PC-9 (cell line): ENCODE measurements at regions of chr1 and their contacts with region 1.

Region 1: DNA sequence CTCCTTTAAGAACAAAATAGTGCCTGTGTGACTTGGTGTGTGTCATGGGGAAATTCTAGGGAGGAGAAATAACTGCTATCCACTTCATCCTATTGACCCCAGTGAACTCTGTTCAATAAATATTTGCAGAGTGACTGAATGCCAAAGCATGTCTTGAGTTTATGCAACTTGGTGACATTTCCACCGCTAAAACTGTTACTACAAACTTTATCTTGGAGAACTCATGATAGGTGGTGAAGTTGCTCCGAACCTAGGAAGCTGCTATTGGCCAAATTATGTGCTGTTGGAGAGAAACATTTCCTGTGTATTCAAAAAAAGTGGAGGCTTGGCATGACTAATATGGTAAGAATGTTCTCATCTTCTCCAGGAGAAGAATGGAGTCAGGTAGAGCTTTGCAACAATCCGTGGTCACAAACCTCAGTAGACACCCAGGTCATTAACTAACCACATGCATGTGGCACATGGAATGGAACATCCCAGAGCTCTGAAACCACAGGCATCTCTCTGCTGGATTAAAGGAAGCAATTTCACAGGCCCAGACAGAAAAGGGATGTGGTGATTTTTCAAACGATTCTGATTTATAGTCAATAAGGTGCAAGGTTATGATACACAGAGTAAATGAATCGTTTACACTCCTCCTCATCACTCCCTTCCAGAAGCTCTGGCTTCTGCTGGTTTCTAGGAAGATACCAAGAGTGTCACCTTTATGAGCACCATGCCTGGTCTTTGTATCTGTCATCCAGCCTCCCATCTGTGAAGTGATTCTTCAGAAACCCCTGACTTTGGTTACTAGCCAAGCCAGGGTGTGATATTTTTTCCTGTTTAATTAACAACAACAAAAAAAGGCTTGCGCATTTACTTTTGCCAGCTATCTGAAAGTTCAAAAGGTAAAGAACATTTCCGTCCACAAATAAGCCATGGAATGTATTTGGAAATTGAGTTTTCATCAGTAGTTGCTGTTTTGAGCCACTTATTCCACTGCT is 361.1 kb downstream of the TGFB2 start:
- DNase-seq: peak; percentile 85 to 99
- H3K4me3 ChIP-seq: peak overlapping the region; percentile 13; the same call in 1 of the 2 replicates
- H3K27ac ChIP-seq: peak overlapping the region; percentile 95
- H3K4me1 ChIP-seq: peaks cover 45% of the 10 kb centered on the region
- H3K27me3 ChIP-seq: no peaks in the 10 kb centered on the region
- CTCF ChIP-seq: no peak

Region 2: DNA sequence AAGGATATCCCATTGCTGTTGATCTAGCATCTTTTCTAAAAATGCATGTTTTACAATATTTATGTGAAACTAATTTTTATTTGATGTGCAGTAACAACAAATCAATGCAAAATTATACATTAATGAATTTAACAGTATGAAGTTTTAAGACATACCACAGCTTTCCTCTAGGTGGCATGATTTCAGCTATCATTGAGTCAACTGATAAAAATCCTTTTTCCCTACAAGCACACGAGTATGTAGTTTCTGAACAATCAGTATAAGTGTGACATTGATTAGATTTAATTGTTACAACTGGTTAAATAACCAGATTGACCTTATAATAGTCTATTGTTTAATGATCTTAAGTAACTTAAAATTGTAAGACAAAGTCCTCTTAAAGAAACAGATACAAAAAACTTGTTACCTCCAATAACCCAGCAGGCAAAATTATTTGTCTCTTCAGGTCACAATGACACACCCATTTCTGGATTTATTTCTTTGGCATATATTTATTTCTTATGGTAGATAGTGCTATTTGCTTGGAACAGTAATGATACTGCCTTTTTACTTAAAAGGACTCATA is 366.9 kb before region 1 on chr1:
- CTCF ChIA-PET with region 1: interaction called, 5 read pairs
- POLR2A ChIA-PET with region 1: interaction called, 10 read pairs
- intact Hi-C with region 1: loop called (anchors 1 kb)
- DNase-seq: no peak
- H3K4me3 ChIP-seq: no peak overlapping the region
- H3K27ac ChIP-seq: no peak overlapping the region
- H3K4me1 ChIP-seq: peaks cover 17% of the 10 kb centered on the region
- H3K27me3 ChIP-seq: no peaks in the 10 kb centered on the region
- CTCF ChIP-seq: peak; percentile 88

Region 3: DNA sequence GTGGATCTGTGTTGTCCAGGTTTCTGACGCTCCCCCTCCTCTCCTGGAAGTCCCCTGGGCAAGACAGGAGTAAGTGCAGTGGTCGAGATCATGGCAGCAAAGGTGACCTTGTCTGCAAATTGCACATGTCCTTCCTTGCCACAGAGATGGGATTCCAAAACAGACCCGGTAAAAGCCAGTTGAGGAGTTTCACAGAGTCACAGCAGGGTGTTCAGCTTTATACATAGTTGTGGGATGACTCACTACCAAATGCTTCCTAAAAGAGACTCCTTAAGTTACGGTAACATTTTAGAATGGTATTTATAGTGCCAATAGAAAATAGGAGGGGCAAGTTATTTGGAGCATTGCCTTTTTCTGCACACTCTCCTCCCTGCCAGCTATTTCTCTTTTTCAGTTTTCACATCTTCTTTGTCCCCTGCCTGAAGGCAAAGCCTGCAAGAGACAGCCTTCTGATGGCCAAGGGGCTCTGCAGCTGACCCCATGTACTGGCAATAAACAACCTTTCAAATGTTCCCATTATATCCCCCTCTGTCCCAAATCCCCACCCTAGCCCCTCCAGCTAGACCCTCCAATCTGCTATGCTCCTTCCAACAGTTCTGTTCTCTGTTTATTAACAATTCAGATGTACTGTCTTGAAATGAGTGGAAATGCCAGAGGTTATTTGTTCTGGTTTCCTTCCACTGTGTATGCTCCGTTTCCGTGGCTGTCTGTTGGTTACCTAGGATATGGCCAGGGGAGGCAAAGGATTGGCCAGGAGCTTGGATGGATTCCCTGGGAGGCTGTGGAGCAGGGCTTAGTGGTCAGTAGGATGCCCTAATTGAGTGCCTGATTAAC is 246.1 kb before region 1 on chr1:
- CTCF ChIA-PET with region 1: no interaction called
- POLR2A ChIA-PET with region 1: interaction called, 4 read pairs
- intact Hi-C with region 1: loop called (anchors 1 kb)
- DNase-seq: peak; percentile 68 to 93
- H3K4me3 ChIP-seq: no peak overlapping the region
- H3K27ac ChIP-seq: peak overlapping the region; percentile 63
- H3K4me1 ChIP-seq: peaks cover 14% of the 10 kb centered on the region
- H3K27me3 ChIP-seq: no peaks in the 10 kb centered on the region
- CTCF ChIP-seq: no peak

Region 4: DNA sequence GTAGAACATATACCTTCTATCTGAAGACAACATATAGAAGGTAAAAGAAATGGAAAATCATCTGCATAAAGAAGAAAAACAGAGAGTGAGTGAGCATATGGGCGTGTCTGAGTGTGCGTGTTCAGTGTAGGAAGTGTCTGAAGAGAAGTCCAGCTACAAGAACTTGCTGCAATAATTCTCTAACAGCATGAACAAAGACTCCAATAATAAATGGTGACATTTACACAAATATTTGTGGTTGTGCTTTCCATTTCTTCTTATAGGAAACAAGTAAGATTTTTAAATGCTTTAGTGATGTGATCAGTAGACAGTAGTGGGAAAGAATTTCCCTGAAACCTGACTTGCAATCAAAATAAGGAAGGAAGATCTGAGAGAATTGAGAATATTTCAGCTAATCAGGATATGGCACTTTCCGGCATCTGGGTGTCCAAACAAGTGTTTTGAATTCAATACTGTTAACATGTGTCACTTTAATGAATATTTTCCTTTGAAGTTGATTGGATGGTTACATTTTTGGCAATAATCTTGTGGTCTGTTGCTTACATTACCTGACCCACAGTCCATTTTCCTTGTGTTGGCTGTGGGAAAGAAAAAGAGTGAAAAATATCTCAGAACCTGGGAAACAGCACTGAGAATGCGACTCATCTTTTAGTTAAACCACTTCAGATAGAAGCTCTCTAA is 207.1 kb before region 1 on chr1:
- CTCF ChIA-PET with region 1: no interaction called
- POLR2A ChIA-PET with region 1: no interaction called
- intact Hi-C with region 1: loop called (anchors 1 kb)
- DNase-seq: peak; percentile 37 to 99
- H3K4me3 ChIP-seq: no peak overlapping the region; the same call in 1 of the 2 replicates
- H3K27ac ChIP-seq: peak overlapping the region; percentile 93
- H3K4me1 ChIP-seq: peaks cover 45% of the 10 kb centered on the region
- H3K27me3 ChIP-seq: no peaks in the 10 kb centered on the region
- CTCF ChIP-seq: no peak

Region 5: DNA sequence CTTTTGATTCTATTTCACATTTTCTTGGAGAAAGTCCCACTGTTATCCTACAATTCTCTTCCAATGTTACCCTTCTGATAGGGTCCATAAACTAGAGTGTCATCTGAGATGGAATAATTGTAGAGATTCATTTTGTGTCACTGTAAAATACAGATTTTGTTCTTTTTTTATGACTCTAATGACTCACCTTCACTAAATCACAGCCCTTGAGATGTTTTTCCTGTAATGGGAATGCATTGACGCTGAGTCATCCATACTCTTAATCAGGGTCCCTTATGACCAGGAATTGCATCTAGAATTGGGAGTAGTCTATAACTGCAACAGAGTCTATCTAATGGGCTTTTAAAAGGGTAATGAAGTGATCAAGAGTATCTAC is 45.5 kb before region 1 on chr1:
- CTCF ChIA-PET with region 1: no interaction called
- POLR2A ChIA-PET with region 1: interaction called, 8 read pairs
- intact Hi-C with region 1: loop called (anchors 1 kb)
- DNase-seq: peak; percentile 23 to 84
- H3K4me3 ChIP-seq: no peak overlapping the region
- H3K27ac ChIP-seq: peak overlapping the region; percentile 81
- H3K4me1 ChIP-seq: peaks cover 44% of the 10 kb centered on the region
- H3K27me3 ChIP-seq: no peaks in the 10 kb centered on the region
- CTCF ChIP-seq: no peak

Region 6: GRCh38 chr1:218728898-218729565 is 22.8 kb after region 1 on chr1:
- CTCF ChIA-PET with region 1: no interaction called
- POLR2A ChIA-PET with region 1: no interaction called
- intact Hi-C with region 1: no loop called
- DNase-seq: no peak
- H3K4me3 ChIP-seq: no peak overlapping the region
- H3K27ac ChIP-seq: no peak overlapping the region
- H3K4me1 ChIP-seq: no peaks in the 10 kb centered on the region
- H3K27me3 ChIP-seq: no peaks in the 10 kb centered on the region
- CTCF ChIP-seq: no peak

Region 7: GRCh38 chr1:219066631-219067349 is 360.6 kb after region 1 on chr1:
- CTCF ChIA-PET with region 1: no interaction called
- POLR2A ChIA-PET with region 1: interaction called, 6 read pairs
- intact Hi-C with region 1: loop called (anchors 1 kb)
- DNase-seq: peak; percentile 2 to 78
- H3K4me3 ChIP-seq: no peak overlapping the region
- H3K27ac ChIP-seq: peak overlapping the region; percentile 30
- H3K4me1 ChIP-seq: peaks cover 5% of the 10 kb centered on the region; the same call in 1 of the 2 replicates
- H3K27me3 ChIP-seq: no peaks in the 10 kb centered on the region
- CTCF ChIP-seq: peak; percentile 84

Region 8: DNA sequence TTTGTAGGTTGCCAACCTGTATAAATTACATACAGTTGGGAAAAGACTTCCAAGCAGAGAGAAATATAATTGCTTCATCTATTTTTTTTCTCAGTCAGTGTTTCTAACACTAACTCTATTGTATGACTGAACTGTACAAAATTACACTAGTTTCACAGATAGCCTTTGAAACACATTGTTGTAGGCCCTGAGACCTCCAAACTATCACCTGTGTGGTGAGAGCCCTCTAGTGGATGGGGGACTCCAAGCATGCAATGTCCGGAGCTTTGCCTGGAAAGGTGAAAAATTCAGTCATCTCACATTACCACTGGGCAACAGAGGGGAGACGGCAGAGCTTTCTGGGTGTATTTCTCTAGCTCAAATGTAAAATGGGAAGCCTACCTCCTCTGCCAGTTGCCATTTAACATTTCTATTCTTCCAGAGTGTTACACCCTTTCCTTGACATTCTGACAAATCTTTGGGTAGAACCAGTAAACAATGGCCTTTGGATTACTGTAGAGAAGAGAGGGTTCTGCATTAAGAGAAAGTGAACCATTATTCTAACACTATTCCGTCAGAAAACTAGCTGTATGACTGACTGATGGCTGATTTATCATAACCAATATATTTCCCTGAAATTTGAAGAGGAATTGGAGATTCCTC is 679.7 kb after region 1 on chr1:
- CTCF ChIA-PET with region 1: no interaction called
- POLR2A ChIA-PET with region 1: no interaction called
- intact Hi-C with region 1: loop called (anchors 10 kb)
- DNase-seq: peak; percentile 43 to 63
- H3K4me3 ChIP-seq: no peak overlapping the region
- H3K27ac ChIP-seq: no peak overlapping the region
- H3K4me1 ChIP-seq: peaks cover 6% of the 10 kb centered on the region; the same call in 1 of the 2 replicates
- H3K27me3 ChIP-seq: no peaks in the 10 kb centered on the region
- CTCF ChIP-seq: peak; percentile 79